ENCODE measurements at regions of chr7 and their contacts with region 1.

Region 1: DNA sequence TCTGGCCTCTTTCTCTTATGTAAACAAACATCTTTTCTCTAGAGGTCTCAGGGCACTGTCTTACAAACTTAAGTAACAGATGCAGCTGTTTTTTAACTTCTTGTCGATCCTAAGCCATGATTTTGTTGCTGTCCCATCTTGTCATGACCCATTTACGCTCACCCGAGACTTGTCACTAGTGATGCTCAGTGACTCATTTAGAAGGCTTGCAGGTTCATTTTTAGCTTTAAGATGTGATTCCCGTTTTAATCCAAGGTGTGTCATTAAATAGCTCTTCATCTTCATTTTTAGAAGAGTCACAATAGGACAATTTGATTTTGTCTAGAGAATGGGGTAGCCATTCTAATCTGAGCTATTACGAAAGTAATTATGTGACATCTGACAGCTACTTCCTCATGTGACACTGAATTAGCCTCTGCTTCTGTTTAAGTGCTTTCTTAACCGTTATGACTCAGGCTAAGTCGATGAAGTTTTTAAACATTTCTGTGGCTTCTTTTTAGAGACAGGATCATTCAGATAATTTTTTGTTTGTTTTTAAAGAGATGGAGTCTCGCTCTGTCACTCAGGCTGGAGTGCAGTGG is 42.7 kb downstream of the SPDYE5 start:
- DNase-seq: no peak
- ATAC-seq: no peak
- H3K4me3 ChIP-seq: no peak overlapping the region
- H3K4me3 Mint-ChIP-seq: no peak overlapping the region
- H3K27ac ChIP-seq: no peak overlapping the region
- H3K27ac Mint-ChIP-seq: no peak overlapping the region
- H3K4me1 ChIP-seq: no peaks in the 10 kb centered on the region
- H3K4me1 Mint-ChIP-seq: no peaks in the 10 kb centered on the region
- H3K27me3 ChIP-seq: no peaks in the 10 kb centered on the region
- H3K27me3 Mint-ChIP-seq: no peaks in the 10 kb centered on the region
- CTCF ChIP-seq: no peak

Region 2: GRCh38 chr7:75072978-75073282 is 461.9 kb before region 1 on chr7:
- CTCF ChIA-PET with region 1: no interaction called
- POLR2A ChIA-PET with region 1: no interaction called
- intact Hi-C with region 1: loop called in 1 of 2 experiments (anchors 5 kb)
- DNase-seq: peak in 1 of 9 experiments; percentile 12
- ATAC-seq: no peak
- H3K4me3 ChIP-seq: peak overlapping the region; percentile 57 to 80
- H3K4me3 Mint-ChIP-seq: peak overlapping the region; percentile 94
- H3K27ac ChIP-seq: peak overlapping the region; percentile 68 to 74
- H3K27ac Mint-ChIP-seq: peak overlapping the region; percentile 96
- H3K4me1 ChIP-seq: no peaks in the 10 kb centered on the region
- H3K4me1 Mint-ChIP-seq: peaks cover 10% of the 10 kb centered on the region
- H3K27me3 ChIP-seq: no peaks in the 10 kb centered on the region
- H3K27me3 Mint-ChIP-seq: no peaks in the 10 kb centered on the region
- CTCF ChIP-seq: no peak

Region 3: GRCh38 chr7:75642810-75643486 is 108.1 kb after region 1 on chr7:
- CTCF ChIA-PET with region 1: no interaction called
- POLR2A ChIA-PET with region 1: no interaction called
- intact Hi-C with region 1: loop called in 1 of 2 experiments (anchors 10 kb)
- DNase-seq: peak; percentile 33 to 85 (median 69)
- ATAC-seq: peak; percentile 98
- H3K4me3 ChIP-seq: no peak overlapping the region
- H3K4me3 Mint-ChIP-seq: no peak overlapping the region
- H3K27ac ChIP-seq: no peak overlapping the region
- H3K27ac Mint-ChIP-seq: no peak overlapping the region
- H3K4me1 ChIP-seq: peaks cover 7% of the 10 kb centered on the region
- H3K4me1 Mint-ChIP-seq: peaks cover 11% of the 10 kb centered on the region
- H3K27me3 ChIP-seq: no peaks in the 10 kb centered on the region
- H3K27me3 Mint-ChIP-seq: no peaks in the 10 kb centered on the region
- CTCF ChIP-seq: peak; percentile 89

Measured in CD8-positive, alpha-beta T cell (primary cell).